PC-3 (cell line): ENCODE measurements at regions of chr17 and their contacts with region 1.

Region 1: GRCh38 chr17:78677303-78678221 is 100.4 kb upstream of the DNAH17 start:
- DNase-seq: peak; percentile 61
- ATAC-seq: peak; percentile 33
- H3K4me3 ChIP-seq: no peak overlapping the region
- H3K27ac ChIP-seq: no peak overlapping the region
- H3K4me1 ChIP-seq: peaks cover 31% of the 10 kb centered on the region
- H3K27me3 ChIP-seq: no peaks in the 10 kb centered on the region
- CTCF ChIP-seq: peak; percentile 35; the same call in 1 of the 2 replicates

Region 2: DNA sequence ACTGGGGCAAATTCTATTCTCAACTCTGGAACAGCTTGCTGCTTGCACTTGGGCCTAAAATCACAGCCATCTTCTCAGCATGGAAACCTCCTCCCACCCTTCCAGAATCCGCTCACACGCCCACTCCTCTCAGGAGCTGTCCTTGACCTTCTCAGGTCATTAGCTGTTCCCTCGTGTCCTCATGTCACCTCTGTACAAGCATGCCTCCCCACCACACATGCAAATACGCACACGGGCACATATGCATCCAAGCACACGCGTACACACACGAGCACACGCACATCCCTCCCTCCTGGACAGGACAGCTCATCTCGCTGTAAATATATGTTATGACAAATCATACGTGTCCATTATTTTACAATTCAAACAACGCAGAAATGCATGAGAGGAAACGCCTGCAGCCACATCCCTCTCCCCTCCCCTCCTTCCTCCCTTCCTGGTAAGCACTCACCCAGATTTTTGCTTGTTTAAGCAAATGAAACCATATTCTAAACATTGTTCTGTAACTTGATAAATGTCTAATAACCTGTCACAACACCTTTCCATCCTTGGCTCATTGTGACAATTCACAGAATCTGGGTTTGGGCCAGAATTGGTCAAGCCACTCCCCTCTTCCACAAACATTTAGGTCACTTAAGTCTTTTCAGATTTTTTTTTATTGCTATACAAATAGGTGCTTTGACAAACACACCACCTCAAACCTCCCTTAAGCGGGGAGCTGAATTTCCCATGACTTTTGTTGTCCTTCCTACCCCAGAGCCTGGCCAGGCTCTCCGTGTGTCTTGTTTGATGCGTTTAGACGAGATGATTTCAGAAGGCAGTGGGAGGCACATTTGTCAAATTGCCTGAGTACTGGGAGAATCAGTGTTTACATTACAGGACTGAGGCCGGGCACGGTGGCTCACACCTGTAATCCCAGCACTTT is 142.0 kb before region 1 on chr17:
- CTCF ChIA-PET with region 1: no interaction called
- POLR2A ChIA-PET with region 1: no interaction called
- intact Hi-C with region 1: loop called (anchors 1 kb)
- DNase-seq: peak; percentile 98
- ATAC-seq: peak; percentile 87
- H3K4me3 ChIP-seq: no peak overlapping the region
- H3K27ac ChIP-seq: peak overlapping the region; percentile 70
- H3K4me1 ChIP-seq: peaks cover 39% of the 10 kb centered on the region
- H3K27me3 ChIP-seq: no peaks in the 10 kb centered on the region
- CTCF ChIP-seq: no peak

Region 3: DNA sequence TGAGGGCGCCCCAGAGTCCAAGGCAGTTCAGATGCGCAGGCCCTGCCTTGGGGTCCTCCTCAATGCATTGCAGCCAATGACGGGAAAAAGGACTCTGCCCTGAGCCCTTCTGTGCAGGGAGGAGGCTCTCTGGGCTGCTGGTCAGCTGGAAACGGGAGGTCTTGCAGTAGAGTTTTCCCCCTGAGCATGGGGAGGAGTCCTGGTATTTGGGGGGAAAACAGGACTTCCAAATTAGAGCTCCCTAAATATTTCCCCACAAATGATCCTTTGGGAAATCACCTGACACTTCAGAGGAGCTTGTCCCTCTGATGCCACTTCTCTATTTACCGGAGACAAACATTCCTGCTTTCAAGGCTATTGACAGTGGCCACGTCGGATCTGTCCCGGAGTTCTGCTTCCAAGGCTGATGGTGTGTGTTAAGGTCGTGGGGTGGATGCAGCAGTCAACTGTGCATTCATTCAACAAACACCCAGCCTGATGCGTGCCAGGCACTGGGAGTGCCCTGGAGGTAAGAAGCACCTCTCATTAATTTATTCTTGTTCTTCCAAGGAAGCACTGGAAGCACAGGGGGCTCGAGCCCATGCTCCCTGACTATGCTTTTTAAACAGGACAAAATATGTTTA is 27.4 kb before region 1 on chr17:
- CTCF ChIA-PET with region 1: no interaction called
- POLR2A ChIA-PET with region 1: no interaction called
- intact Hi-C with region 1: no loop called
- DNase-seq: no peak
- ATAC-seq: no peak
- H3K4me3 ChIP-seq: no peak overlapping the region
- H3K27ac ChIP-seq: no peak overlapping the region
- H3K4me1 ChIP-seq: no peaks in the 10 kb centered on the region
- H3K27me3 ChIP-seq: peaks cover 21% of the 10 kb centered on the region; the same call in 1 of the 2 replicates
- CTCF ChIP-seq: no peak

Region 4: GRCh38 chr17:78661093-78661770 is 16.3 kb before region 1 on chr17:
- CTCF ChIA-PET with region 1: no interaction called
- POLR2A ChIA-PET with region 1: no interaction called
- intact Hi-C with region 1: loop called (anchors 2 kb)
- DNase-seq: peak; percentile 92
- ATAC-seq: peak; percentile 95
- H3K4me3 ChIP-seq: no peak overlapping the region
- H3K27ac ChIP-seq: peak overlapping the region; percentile 39
- H3K4me1 ChIP-seq: peaks cover 16% of the 10 kb centered on the region
- H3K27me3 ChIP-seq: no peaks in the 10 kb centered on the region
- CTCF ChIP-seq: no peak

Region 5: GRCh38 chr17:78745407-78746088 is 68.0 kb after region 1 on chr17:
- CTCF ChIA-PET with region 1: no interaction called
- POLR2A ChIA-PET with region 1: no interaction called
- intact Hi-C with region 1: loop called (anchors 2 kb)
- DNase-seq: peak; percentile 65
- ATAC-seq: peak; percentile 18
- H3K4me3 ChIP-seq: no peak overlapping the region
- H3K27ac ChIP-seq: no peak overlapping the region
- H3K4me1 ChIP-seq: peaks cover 11% of the 10 kb centered on the region
- H3K27me3 ChIP-seq: no peaks in the 10 kb centered on the region
- CTCF ChIP-seq: peak; percentile 79

Region 6: GRCh38 chr17:78993241-78993956 is 315.8 kb after region 1 on chr17:
- CTCF ChIA-PET with region 1: no interaction called
- POLR2A ChIA-PET with region 1: no interaction called
- intact Hi-C with region 1: no loop called
- DNase-seq: peak; percentile 68
- ATAC-seq: no peak
- H3K4me3 ChIP-seq: no peak overlapping the region
- H3K27ac ChIP-seq: no peak overlapping the region
- H3K4me1 ChIP-seq: peaks cover 34% of the 10 kb centered on the region
- H3K27me3 ChIP-seq: no peaks in the 10 kb centered on the region
- CTCF ChIP-seq: peak; percentile 96